Activated CD8-positive, alpha-beta T cell treated with anti-CD3 and anti-CD28 coated beads for 36 hours (primary cell): ENCODE measurements at regions of chr15 and their contacts with region 1.

Region 1: GRCh38 chr15:67839929-67840748 is at the start of gene RNU6-1:
- DNase-seq: peak; percentile 96
- ATAC-seq: peak; percentile 84
- H3K4me3 Mint-ChIP-seq: peak within 1 kb of the TSS; percentile 84
- H3K27ac Mint-ChIP-seq: peak within 1 kb of the TSS; percentile 97
- H3K4me1 Mint-ChIP-seq: peaks cover 16% of the 10 kb centered on the region
- H3K27me3 Mint-ChIP-seq: peaks cover 18% of the 10 kb centered on the region
- CTCF ChIP-seq: no peak
- total RNA-seq, gene RNU6-1: not detected

Region 2: DNA sequence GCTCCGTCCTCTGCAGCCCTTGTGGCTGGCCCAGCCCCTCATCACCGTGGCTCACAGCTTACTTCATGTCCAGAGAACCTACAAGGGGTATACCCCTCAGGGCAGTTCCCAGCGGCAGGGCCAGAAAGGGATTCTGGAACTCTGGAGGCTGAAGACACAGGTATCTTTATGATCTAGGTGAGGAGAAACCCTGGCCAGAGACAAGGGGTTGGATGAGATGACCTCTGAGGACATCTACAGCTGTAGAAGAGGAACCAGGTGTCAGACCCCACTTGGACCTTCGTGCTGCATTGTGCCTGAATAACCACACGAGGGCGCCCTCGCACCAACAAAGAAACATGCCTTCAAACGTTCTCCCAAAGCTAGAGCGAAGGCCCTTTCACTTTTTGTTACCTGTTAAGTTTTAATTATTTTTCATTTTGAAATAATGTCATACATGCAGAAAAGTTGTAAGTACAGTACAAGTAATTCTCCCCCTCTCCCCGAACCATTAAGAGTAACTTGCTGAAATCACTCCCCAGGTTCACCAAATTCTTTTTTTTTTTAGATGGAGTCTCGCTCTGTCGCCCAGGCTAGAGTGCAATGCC is 893.5 kb before region 1 on chr15:
- CTCF ChIA-PET with region 1: interaction called, 4 read pairs
- POLR2A ChIA-PET with region 1: no interaction called
- intact Hi-C with region 1: loop called (anchors 10 kb)
- DNase-seq: peak; percentile 82
- ATAC-seq: peak; percentile 89
- H3K4me3 Mint-ChIP-seq: no peak overlapping the region
- H3K27ac Mint-ChIP-seq: no peak overlapping the region
- H3K4me1 Mint-ChIP-seq: peaks cover 2% of the 10 kb centered on the region
- H3K27me3 Mint-ChIP-seq: no peaks in the 10 kb centered on the region
- CTCF ChIP-seq: peak; percentile 89

Region 3: DNA sequence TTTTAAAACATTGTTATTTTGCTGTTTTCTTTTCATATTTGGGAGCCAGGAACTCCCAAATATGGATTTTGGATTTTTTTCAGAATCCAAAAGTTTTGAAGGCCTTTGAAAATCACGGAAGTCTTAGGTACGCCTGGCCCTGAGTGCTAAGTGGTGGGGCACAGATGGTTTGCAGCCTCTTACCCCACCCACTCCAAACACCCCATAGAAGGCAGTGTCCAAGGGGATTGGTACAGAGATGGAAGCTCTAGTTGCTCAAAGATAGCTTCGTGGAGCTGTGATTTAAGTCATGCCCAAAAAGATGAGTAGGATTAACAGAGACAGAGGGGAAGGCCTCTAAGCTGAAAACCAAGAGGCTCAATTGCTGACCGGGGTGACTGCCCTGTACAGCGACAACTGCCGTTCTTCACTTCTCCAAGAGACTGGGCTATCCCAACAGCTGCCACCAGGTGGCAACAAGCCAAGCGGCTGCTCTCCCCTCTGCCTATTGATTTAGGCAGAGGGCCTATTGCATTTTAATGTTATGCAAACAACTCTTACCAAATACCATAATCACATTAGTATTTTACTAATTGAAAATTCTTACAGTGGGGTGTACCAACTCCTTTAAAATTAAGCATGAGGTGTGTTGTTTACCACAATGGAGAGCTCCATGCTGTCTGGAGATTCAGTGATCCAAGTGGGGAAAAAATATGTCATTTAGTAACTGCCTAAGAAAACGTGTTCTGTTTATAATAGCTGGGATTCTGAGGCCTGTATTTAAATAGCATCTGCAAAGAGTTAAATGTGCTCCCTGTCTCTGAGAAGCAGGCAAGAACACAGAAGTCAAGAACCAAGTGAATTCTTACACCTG is 383.2 kb before region 1 on chr15:
- CTCF ChIA-PET with region 1: interaction called, 74 read pairs
- POLR2A ChIA-PET with region 1: interaction called, 3 read pairs
- intact Hi-C with region 1: loop called (anchors 2 kb)
- DNase-seq: peak; percentile 91
- ATAC-seq: peak; percentile 99
- H3K4me3 Mint-ChIP-seq: no peak overlapping the region
- H3K27ac Mint-ChIP-seq: no peak overlapping the region
- H3K4me1 Mint-ChIP-seq: peaks cover 2% of the 10 kb centered on the region
- H3K27me3 Mint-ChIP-seq: peaks cover 3% of the 10 kb centered on the region
- CTCF ChIP-seq: peak; percentile 89

Region 4: GRCh38 chr15:67501177-67501835 is 338.8 kb before region 1 on chr15:
- CTCF ChIA-PET with region 1: interaction called, 10 read pairs
- POLR2A ChIA-PET with region 1: no interaction called
- intact Hi-C with region 1: no loop called
- DNase-seq: no peak
- ATAC-seq: no peak
- H3K4me3 Mint-ChIP-seq: no peak overlapping the region
- H3K27ac Mint-ChIP-seq: no peak overlapping the region
- H3K4me1 Mint-ChIP-seq: peaks cover 2% of the 10 kb centered on the region
- H3K27me3 Mint-ChIP-seq: no peaks in the 10 kb centered on the region
- CTCF ChIP-seq: no peak

Region 5: DNA sequence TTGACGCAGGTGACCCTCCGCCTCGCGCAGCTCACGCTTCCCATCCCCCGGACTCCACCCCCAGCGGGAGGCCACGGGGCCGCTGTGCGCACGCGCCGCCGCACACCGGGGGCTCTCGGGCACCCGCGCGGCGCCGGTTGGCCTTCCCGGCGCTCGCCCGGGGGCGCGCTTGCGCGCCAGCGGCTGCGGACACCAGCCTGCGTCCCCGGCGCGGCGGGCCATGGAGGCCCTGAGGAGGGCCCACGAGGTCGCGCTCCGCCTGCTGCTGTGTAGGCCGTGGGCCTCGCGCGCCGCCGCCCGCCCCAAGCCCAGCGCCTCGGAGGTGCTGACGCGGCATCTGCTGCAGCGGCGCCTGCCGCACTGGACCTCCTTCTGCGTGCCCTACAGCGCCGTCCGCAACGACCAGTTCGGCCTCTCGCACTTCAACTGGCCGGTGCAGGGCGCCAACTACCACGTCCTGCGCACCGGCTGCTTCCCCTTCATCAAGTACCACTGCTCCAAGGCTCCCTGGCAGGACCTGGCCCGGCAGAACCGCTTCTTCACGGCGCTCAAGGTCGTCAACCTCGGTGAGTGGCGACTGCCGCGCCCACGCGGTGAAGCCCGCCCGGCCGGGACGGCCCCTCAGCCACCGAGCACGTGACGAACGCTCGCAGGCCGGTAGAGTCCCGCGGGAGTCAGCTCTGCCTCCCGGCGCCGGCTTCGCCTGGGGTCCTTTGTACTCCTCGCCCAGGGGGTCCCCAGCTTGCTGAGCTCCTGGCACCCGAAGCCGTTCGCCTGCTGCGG is 318.9 kb before region 1 on chr15 and contains the start of gene C15orf61:
- CTCF ChIA-PET with region 1: interaction called, 3 read pairs
- POLR2A ChIA-PET with region 1: interaction called, 3 read pairs
- intact Hi-C with region 1: loop called (anchors 10 kb)
- DNase-seq: peak; percentile 88
- ATAC-seq: peak; percentile 86
- H3K4me3 Mint-ChIP-seq: peak within 1 kb of the TSS; percentile 96
- H3K27ac Mint-ChIP-seq: peak within 1 kb of the TSS; percentile 98
- H3K4me1 Mint-ChIP-seq: peaks cover 25% of the 10 kb centered on the region
- H3K27me3 Mint-ChIP-seq: no peaks in the 10 kb centered on the region
- CTCF ChIP-seq: no peak
- total RNA-seq, gene C15orf61: 7.5 to 7.8 TPM

Region 6: GRCh38 chr15:67784090-67784781 is 55.9 kb before region 1 on chr15:
- CTCF ChIA-PET with region 1: interaction called, 32 read pairs
- POLR2A ChIA-PET with region 1: no interaction called
- intact Hi-C with region 1: loop called (anchors 2 kb)
- DNase-seq: no peak
- ATAC-seq: no peak
- H3K4me3 Mint-ChIP-seq: no peak overlapping the region
- H3K27ac Mint-ChIP-seq: peak overlapping the region; percentile 5
- H3K4me1 Mint-ChIP-seq: peaks cover 30% of the 10 kb centered on the region
- H3K27me3 Mint-ChIP-seq: no peaks in the 10 kb centered on the region
- CTCF ChIP-seq: no peak

Region 7: GRCh38 chr15:67803996-67804843 is 35.9 kb before region 1 on chr15:
- CTCF ChIA-PET with region 1: no interaction called
- POLR2A ChIA-PET with region 1: no interaction called
- intact Hi-C with region 1: no loop called
- DNase-seq: no peak
- ATAC-seq: no peak
- H3K4me3 Mint-ChIP-seq: no peak overlapping the region
- H3K27ac Mint-ChIP-seq: no peak overlapping the region
- H3K4me1 Mint-ChIP-seq: no peaks in the 10 kb centered on the region
- H3K27me3 Mint-ChIP-seq: no peaks in the 10 kb centered on the region
- CTCF ChIP-seq: no peak

Region 8: DNA sequence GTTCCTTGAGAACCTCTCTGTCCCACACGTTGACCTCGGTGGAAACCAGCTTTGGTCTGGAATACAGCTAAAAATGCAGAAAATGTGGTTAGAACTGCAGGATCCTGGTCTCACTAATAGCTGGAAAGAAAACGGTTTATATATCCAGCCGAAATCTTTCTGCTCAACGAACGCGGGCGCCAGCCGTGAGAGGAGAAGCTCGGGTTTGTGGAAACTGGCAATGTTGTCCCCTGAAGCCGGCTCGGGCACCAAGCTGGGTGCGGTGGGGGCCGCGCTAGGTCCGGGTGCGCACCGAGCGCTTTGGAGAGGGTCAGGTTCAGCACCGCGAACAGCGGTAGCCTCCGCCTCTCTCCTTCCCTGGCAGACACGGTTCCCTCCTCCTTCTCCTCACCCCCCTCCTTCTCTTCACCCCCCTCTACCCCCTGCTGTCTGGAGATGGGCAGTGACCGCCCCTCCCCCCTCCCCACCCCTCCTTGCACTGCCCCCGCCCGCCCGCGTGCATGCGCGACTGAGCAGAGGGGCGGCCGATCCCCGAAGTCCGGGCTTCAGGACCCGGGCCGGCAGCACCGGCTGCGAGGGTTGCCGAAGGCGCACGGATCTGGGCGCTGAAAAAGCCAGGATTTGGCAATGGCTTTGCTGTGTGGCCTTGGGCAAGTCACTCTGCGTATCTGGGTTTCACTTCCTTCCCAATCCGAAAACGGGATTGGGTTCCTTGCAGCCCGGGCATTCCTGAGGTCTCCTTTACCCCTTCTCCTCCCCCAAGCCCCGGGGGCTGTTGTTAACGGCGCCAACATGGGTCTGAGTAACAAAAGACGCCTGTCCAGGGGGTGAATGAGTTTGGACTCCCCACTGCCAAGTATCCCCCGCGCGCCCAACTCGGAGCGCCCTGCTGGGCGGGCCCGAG is 14.9 kb before region 1 on chr15 and contains the start of gene SKOR1:
- CTCF ChIA-PET with region 1: interaction called, 15 read pairs
- POLR2A ChIA-PET with region 1: interaction called, 3 read pairs
- intact Hi-C with region 1: no loop called
- DNase-seq: no peak
- ATAC-seq: no peak
- H3K4me3 Mint-ChIP-seq: no peak within 1 kb of the TSS
- H3K27ac Mint-ChIP-seq: no peak within 1 kb of the TSS
- H3K4me1 Mint-ChIP-seq: peaks cover 51% of the 10 kb centered on the region
- H3K27me3 Mint-ChIP-seq: peaks cover 73% of the 10 kb centered on the region
- CTCF ChIP-seq: no peak
- total RNA-seq, gene SKOR1: 0.09 to 0.25 TPM

Region 9: GRCh38 chr15:67850995-67851571 is 10.9 kb after region 1 on chr15:
- CTCF ChIA-PET with region 1: no interaction called
- POLR2A ChIA-PET with region 1: no interaction called
- intact Hi-C with region 1: no loop called
- DNase-seq: no peak
- ATAC-seq: no peak
- H3K4me3 Mint-ChIP-seq: no peak overlapping the region
- H3K27ac Mint-ChIP-seq: no peak overlapping the region
- H3K4me1 Mint-ChIP-seq: peaks cover 8% of the 10 kb centered on the region
- H3K27me3 Mint-ChIP-seq: peaks cover 2% of the 10 kb centered on the region
- CTCF ChIP-seq: no peak

Region 10: DNA sequence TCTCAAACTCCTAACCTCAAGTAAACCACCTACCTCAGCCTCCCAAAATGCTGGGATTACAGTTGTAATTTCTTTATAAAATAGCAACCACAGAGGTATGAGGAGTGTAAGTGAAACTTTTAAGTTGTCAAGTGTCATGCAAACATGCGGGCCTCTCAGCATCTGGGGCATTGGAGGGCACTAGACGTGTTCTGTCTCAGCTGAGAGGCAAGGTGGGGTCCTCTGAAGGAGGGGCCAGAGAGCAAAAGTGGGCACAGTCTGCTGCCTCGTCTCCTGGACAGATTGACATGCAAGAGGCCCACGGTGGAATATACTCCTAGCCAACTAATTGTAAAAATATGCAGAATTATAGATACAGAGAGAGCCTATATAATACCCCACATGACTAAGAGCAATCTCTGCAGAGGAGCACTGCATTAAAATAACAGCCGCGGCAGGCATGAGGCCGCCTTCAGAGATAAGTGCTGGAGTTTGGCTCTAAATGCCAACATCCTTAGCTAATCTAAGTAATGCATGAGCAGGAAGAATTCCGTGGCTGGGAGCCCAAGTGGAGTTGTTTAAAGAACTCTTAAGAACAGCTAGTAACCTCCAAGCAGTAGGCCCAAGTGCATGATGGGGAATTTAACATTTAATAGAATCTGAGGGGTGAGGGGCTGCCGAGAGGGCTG is 87.5 kb after region 1 on chr15:
- CTCF ChIA-PET with region 1: no interaction called
- POLR2A ChIA-PET with region 1: no interaction called
- intact Hi-C with region 1: no loop called
- DNase-seq: no peak
- ATAC-seq: no peak
- H3K4me3 Mint-ChIP-seq: no peak overlapping the region
- H3K27ac Mint-ChIP-seq: no peak overlapping the region
- H3K4me1 Mint-ChIP-seq: no peaks in the 10 kb centered on the region
- H3K27me3 Mint-ChIP-seq: no peaks in the 10 kb centered on the region
- CTCF ChIP-seq: no peak

Region 11: GRCh38 chr15:67998599-67999122 is 158.5 kb after region 1 on chr15:
- CTCF ChIA-PET with region 1: no interaction called
- POLR2A ChIA-PET with region 1: no interaction called
- intact Hi-C with region 1: no loop called
- DNase-seq: no peak
- ATAC-seq: no peak
- H3K4me3 Mint-ChIP-seq: no peak overlapping the region
- H3K27ac Mint-ChIP-seq: no peak overlapping the region
- H3K4me1 Mint-ChIP-seq: no peaks in the 10 kb centered on the region
- H3K27me3 Mint-ChIP-seq: no peaks in the 10 kb centered on the region
- CTCF ChIP-seq: no peak